Mammary epithelial cell (primary cell): ENCODE measurements at regions of chr10 and their contacts with region 1.

Region 1: DNA sequence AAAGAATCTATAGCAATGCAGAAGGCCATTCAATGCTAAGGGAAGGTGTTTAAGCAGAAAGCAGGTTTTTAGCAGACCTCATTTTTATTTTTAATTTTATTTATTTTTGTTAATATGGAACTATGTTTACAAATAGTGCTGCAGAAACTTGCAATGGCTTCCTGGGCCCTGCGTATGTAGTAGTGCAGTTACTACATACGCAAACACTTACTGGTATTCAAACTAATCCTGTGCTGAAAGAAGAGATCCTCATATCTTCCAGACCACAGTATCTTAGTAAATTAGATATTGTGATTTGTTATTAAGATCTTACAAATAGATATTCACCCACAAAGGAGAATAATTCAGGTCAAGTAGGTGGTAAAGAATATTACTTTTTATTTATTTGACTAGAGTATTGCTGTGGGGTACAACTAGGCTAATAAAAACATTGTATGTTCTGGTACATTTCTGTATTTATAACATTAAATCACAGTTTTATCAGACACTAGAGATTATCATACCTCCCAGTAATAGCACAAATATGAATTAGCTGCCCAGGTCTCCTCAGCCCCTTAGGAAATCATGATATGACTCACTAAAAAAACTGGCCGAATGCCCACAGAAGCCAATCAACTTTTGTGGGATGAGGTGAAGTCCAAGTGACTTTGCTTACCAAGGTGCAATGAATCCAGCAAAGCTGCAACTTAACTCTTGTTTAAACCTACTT is 57.6 kb downstream of the RNLS start:
- DNase-seq: peak; percentile 88
- H3K4me3 ChIP-seq: no peak overlapping the region
- H3K27ac ChIP-seq: no peak overlapping the region
- H3K4me1 ChIP-seq: peaks cover 15% of the 10 kb centered on the region
- H3K27me3 ChIP-seq: no peaks in the 10 kb centered on the region
- CTCF ChIP-seq: no peak

Region 2: DNA sequence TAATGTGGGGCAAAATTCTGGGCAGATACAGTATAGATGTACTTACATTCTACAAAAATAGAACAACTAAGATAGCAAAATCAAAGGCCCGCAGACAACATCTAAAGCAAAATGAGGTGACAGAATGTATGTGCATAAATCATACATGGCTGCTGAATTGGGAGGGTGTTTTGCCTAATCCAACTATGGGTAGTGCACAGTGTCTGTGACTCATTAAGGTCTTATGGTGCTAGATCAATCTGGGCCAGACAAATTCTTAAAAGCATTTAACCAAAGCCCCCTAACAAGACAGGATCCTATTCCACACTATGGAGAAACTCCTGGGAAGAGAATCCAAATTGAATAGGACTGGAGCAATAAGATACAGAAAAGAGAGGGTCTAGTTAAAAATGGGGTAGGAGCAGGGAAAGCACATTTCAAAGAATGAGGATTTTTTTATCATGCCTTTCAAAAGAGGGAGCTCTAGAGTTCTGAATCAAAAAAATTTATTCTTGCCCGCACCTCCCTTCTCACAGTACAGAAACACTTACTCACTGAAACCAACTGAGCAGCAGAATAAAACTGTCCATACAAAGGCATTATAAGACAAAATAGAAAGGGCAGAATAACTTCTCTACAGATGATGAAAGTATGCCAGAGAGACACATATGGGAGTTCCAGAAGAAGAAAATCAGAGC is 123.7 kb before region 1 on chr10:
- CTCF ChIA-PET with region 1: no interaction called
- dilution Hi-C with region 1: no loop called
- in situ Hi-C with region 1: loop called in 1 of 2 experiments (anchors 25 kb)
- intact Hi-C with region 1: no loop called
- DNase-seq: peak; percentile 49
- H3K4me3 ChIP-seq: no peak overlapping the region
- H3K27ac ChIP-seq: no peak overlapping the region
- H3K4me1 ChIP-seq: no peaks in the 10 kb centered on the region
- H3K27me3 ChIP-seq: no peaks in the 10 kb centered on the region
- CTCF ChIP-seq: peak; percentile 15 to 54

Region 3: GRCh38 chr10:90062786-90063185 is 1537.3 kb after region 1 on chr10:
- CTCF ChIA-PET with region 1: no interaction called
- dilution Hi-C with region 1: no loop called
- in situ Hi-C with region 1: no loop called
- intact Hi-C with region 1: loop called (anchors 10 kb)
- DNase-seq: no peak
- H3K4me3 ChIP-seq: no peak overlapping the region
- H3K27ac ChIP-seq: no peak overlapping the region
- H3K4me1 ChIP-seq: no peaks in the 10 kb centered on the region
- H3K27me3 ChIP-seq: no peaks in the 10 kb centered on the region
- CTCF ChIP-seq: no peak